Activated naive CD4-positive, alpha-beta T cell treated with anti-CD3 and anti-CD28 coated beads for 36 hours (primary cell): ENCODE measurements at regions of chr20 and their contacts with region 1.

Region 1: GRCh38 chr20:62386383-62387218 is at the start of gene RPS21:
- DNase-seq: peak; percentile 94
- H3K4me3 Mint-ChIP-seq: peak within 1 kb of the TSS; percentile 87
- H3K27ac Mint-ChIP-seq: peak within 1 kb of the TSS; percentile 76
- H3K4me1 Mint-ChIP-seq: peaks cover 51% of the 10 kb centered on the region
- H3K27me3 Mint-ChIP-seq: no peaks in the 10 kb centered on the region
- total RNA-seq, gene RPS21: 2,995 to 3,072 TPM

Region 2: GRCh38 chr20:62025832-62026563 is 360.6 kb before region 1 on chr20:
- CTCF ChIA-PET with region 1: interaction called, 3 read pairs
- intact Hi-C with region 1: loop called (anchors 10 kb)
- DNase-seq: peak; percentile 34
- H3K4me3 Mint-ChIP-seq: no peak overlapping the region
- H3K27ac Mint-ChIP-seq: no peak overlapping the region
- H3K4me1 Mint-ChIP-seq: peaks cover 58% of the 10 kb centered on the region
- H3K27me3 Mint-ChIP-seq: no peaks in the 10 kb centered on the region

Region 3: GRCh38 chr20:62182613-62183425 is 203.8 kb before region 1 on chr20 and contains the start of gene MTG2:
- CTCF ChIA-PET with region 1: no interaction called
- intact Hi-C with region 1: loop called (anchors 1 kb)
- DNase-seq: peak; percentile 96
- H3K4me3 Mint-ChIP-seq: peak within 1 kb of the TSS; percentile 87
- H3K27ac Mint-ChIP-seq: peak within 1 kb of the TSS; percentile 84
- H3K4me1 Mint-ChIP-seq: peaks cover 38% of the 10 kb centered on the region
- H3K27me3 Mint-ChIP-seq: no peaks in the 10 kb centered on the region
- total RNA-seq, gene MTG2: 34.3 to 36.4 TPM

Region 4: GRCh38 chr20:62237801-62238571 is 148.6 kb before region 1 on chr20 and contains the start of gene OSBPL2:
- CTCF ChIA-PET with region 1: interaction called, 3 read pairs
- intact Hi-C with region 1: loop called (anchors 1 kb)
- DNase-seq: peak; percentile 100
- H3K4me3 Mint-ChIP-seq: peak within 1 kb of the TSS; percentile 78
- H3K27ac Mint-ChIP-seq: peak within 1 kb of the TSS; percentile 79
- H3K4me1 Mint-ChIP-seq: peaks cover 28% of the 10 kb centered on the region
- H3K27me3 Mint-ChIP-seq: no peaks in the 10 kb centered on the region
- total RNA-seq, gene OSBPL2: 23.6 to 24.7 TPM

Region 5: GRCh38 chr20:62407221-62407992 is 20.8 kb after region 1 on chr20 and contains the start of gene CABLES2:
- CTCF ChIA-PET with region 1: no interaction called
- intact Hi-C with region 1: loop called (anchors 1 kb)
- DNase-seq: peak; percentile 94
- H3K4me3 Mint-ChIP-seq: peak within 1 kb of the TSS; percentile 78
- H3K27ac Mint-ChIP-seq: peak within 1 kb of the TSS; percentile 80
- H3K4me1 Mint-ChIP-seq: peaks cover 31% of the 10 kb centered on the region
- H3K27me3 Mint-ChIP-seq: no peaks in the 10 kb centered on the region
- total RNA-seq, gene CABLES2: 3.6 to 5.1 TPM

Region 6: DNA sequence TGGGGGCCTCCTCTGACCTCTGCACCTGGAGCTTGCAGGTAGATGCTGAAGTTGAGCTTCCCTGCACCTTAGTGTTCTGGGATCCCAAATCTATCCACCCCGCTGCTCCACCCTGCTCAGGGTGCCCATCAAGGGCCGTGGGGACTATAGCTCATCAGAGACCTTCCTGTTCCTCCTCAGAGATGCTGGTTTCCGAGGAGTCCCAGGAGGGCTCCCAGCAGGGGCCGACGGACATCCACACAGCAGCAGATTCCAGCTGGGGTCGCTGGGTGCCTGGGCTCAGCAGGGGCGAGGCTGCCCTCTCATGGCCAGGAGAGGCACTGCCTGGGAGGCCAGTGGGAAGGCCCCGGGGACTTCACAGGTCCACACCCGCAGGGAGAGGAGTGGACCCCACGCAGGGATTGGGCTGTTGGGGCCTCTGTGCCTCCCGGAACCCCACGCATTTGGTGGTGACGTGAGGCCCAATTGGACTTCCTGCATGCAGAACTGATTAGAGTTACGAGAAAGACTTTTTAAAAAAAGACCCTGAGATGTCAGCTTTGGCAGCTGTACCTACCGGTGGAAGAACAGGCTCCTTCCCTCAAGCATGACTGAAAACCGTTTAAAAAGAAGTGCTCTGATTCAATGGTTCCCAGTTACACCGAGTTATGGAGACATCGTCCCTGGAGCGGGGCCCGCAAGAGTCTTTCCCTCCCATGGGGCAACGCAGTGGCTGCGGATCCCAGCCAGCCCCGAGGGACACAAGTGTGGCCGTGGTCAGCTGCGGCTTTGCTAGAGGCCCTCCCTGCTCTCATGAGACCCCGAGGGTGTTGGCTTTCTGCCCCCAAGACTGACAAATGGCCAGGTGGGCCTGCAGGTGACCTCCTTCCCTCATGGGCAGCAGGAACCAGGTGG is 230.4 kb after region 1 on chr20:
- CTCF ChIA-PET with region 1: no interaction called
- intact Hi-C with region 1: loop called (anchors 5 kb)
- DNase-seq: peak; percentile 85
- H3K4me3 Mint-ChIP-seq: peak overlapping the region; percentile 52
- H3K27ac Mint-ChIP-seq: peak overlapping the region; percentile 84
- H3K4me1 Mint-ChIP-seq: peaks cover 27% of the 10 kb centered on the region
- H3K27me3 Mint-ChIP-seq: no peaks in the 10 kb centered on the region